CD4-positive, alpha-beta memory T cell (primary cell): ENCODE measurements at regions of chr10 and their contacts with region 1.

Region 1: GRCh38 chr10:109978481-109978880 is 29.3 kb upstream of the ADD3 start:
- DNase-seq: peak; percentile 51 to 63 (median 58)
- H3K4me3 ChIP-seq: no peak overlapping the region
- H3K4me3 Mint-ChIP-seq: no peak overlapping the region
- H3K27ac ChIP-seq: no peak overlapping the region
- H3K27ac Mint-ChIP-seq: no peak overlapping the region
- H3K4me1 ChIP-seq: no peaks in the 10 kb centered on the region
- H3K4me1 Mint-ChIP-seq: peaks cover 0 to 5% (median under 1%) of the 10 kb centered on the region in 4 donors
- H3K27me3 ChIP-seq: no peaks in the 10 kb centered on the region
- H3K27me3 Mint-ChIP-seq: no peaks in the 10 kb centered on the region

Region 2: DNA sequence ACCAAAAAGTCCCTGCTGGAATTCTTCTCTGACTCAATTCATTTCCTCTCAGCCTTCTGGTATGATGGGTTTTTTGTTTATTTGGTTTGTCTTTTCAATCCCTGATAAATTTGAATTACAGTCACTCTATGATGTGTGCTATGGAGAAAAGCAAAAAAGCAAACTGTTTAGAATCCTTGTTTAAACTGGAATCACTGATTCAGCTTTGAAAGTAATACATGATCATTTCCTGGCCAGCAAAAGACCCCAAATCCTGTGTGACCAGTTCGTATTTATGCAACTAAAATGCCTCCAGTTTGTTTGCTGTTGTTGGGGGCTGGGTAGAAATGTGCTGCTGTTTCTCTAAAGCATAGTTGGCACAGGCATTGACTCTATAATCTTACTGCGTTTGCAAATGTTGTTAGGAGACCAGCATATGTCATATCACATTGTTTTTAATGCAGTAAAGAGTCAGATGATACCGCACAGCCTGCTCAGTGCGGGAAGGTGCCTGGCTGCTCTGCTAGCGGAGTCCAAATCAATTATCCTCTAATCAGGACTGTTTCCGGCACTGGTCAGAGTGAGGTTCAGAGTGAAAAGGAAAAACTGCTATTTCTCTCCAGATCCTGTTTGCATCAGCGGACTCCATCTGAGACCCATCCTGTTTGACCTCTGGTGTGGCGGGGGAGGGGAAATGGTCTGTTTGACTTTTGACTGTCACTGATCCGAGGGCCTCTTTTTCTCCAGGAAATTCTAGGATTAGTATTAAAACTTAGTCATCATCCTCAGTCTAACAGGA is 11.3 kb before region 1 on chr10:
- CTCF ChIA-PET with region 1: interaction called, 13 read pairs
- POLR2A ChIA-PET with region 1: no interaction called
- intact Hi-C with region 1: no loop called
- DNase-seq: no peak
- H3K4me3 ChIP-seq: no peak overlapping the region
- H3K4me3 Mint-ChIP-seq: no peak overlapping the region
- H3K27ac ChIP-seq: no peak overlapping the region
- H3K27ac Mint-ChIP-seq: no peak overlapping the region
- H3K4me1 ChIP-seq: no peaks in the 10 kb centered on the region
- H3K4me1 Mint-ChIP-seq: peaks cover 0 to 2% (median under 1%) of the 10 kb centered on the region in 4 donors
- H3K27me3 ChIP-seq: no peaks in the 10 kb centered on the region
- H3K27me3 Mint-ChIP-seq: peaks cover 0 to 6% of the 10 kb centered on the region in 2 donors

Region 3: GRCh38 chr10:109998513-109998912 is 20.0 kb after region 1 on chr10:
- CTCF ChIA-PET with region 1: interaction called, 15 read pairs
- POLR2A ChIA-PET with region 1: no interaction called
- intact Hi-C with region 1: no loop called
- DNase-seq: no peak
- H3K4me3 ChIP-seq: no peak overlapping the region
- H3K4me3 Mint-ChIP-seq: no peak overlapping the region
- H3K27ac ChIP-seq: no peak overlapping the region
- H3K27ac Mint-ChIP-seq: no peak overlapping the region
- H3K4me1 ChIP-seq: no peaks in the 10 kb centered on the region
- H3K4me1 Mint-ChIP-seq: peaks cover 2 to 13% (median 6%) of the 10 kb centered on the region in 4 donors
- H3K27me3 ChIP-seq: no peaks in the 10 kb centered on the region
- H3K27me3 Mint-ChIP-seq: no peaks in the 10 kb centered on the region

Region 4: GRCh38 chr10:110016039-110016438 is 37.6 kb after region 1 on chr10:
- CTCF ChIA-PET with region 1: interaction called, 42 read pairs
- POLR2A ChIA-PET with region 1: no interaction called
- intact Hi-C with region 1: loop called (anchors 2 kb)
- DNase-seq: no peak
- H3K4me3 ChIP-seq: no peak overlapping the region
- H3K4me3 Mint-ChIP-seq: peak overlapping the region in 7 of 8 donors; percentile 16 to 75 (median 57)
- H3K27ac ChIP-seq: no peak overlapping the region
- H3K27ac Mint-ChIP-seq: peak overlapping the region; percentile 79 to 85 (median 83)
- H3K4me1 ChIP-seq: peaks cover 92% of the 10 kb centered on the region
- H3K4me1 Mint-ChIP-seq: peaks cover 60 to 92% (median 76%) of the 10 kb centered on the region in 4 donors
- H3K27me3 ChIP-seq: no peaks in the 10 kb centered on the region
- H3K27me3 Mint-ChIP-seq: no peaks in the 10 kb centered on the region

Region 5: GRCh38 chr10:110036640-110037039 is 58.2 kb after region 1 on chr10:
- CTCF ChIA-PET with region 1: interaction called, 6 read pairs
- POLR2A ChIA-PET with region 1: no interaction called
- intact Hi-C with region 1: loop called (anchors 2 kb)
- DNase-seq: no peak
- H3K4me3 ChIP-seq: no peak overlapping the region
- H3K4me3 Mint-ChIP-seq: peak overlapping the region in 2 of 8 donors; percentile 33 to 37
- H3K27ac ChIP-seq: no peak overlapping the region
- H3K27ac Mint-ChIP-seq: peak overlapping the region in 3 of 7 donors; percentile 8 to 51 (median 46)
- H3K4me1 ChIP-seq: peaks cover 91% of the 10 kb centered on the region
- H3K4me1 Mint-ChIP-seq: peaks cover 57 to 93% (median 75%) of the 10 kb centered on the region in 4 donors
- H3K27me3 ChIP-seq: no peaks in the 10 kb centered on the region
- H3K27me3 Mint-ChIP-seq: no peaks in the 10 kb centered on the region

Region 6: GRCh38 chr10:110103921-110104461 is 125.5 kb after region 1 on chr10:
- CTCF ChIA-PET with region 1: interaction called, 9 read pairs
- POLR2A ChIA-PET with region 1: no interaction called
- intact Hi-C with region 1: loop called (anchors 1 kb)
- DNase-seq: no peak
- H3K4me3 ChIP-seq: no peak overlapping the region
- H3K4me3 Mint-ChIP-seq: peak overlapping the region in 1 of 8 donors; percentile 25
- H3K27ac ChIP-seq: no peak overlapping the region
- H3K27ac Mint-ChIP-seq: peak overlapping the region in 5 of 7 donors; percentile 4 to 73 (median 44)
- H3K4me1 ChIP-seq: peaks cover 35% of the 10 kb centered on the region
- H3K4me1 Mint-ChIP-seq: peaks cover 34 to 72% (median 59%) of the 10 kb centered on the region in 4 donors
- H3K27me3 ChIP-seq: no peaks in the 10 kb centered on the region
- H3K27me3 Mint-ChIP-seq: no peaks in the 10 kb centered on the region

Region 7: GRCh38 chr10:110168601-110169481 is 190.4 kb after region 1 on chr10:
- CTCF ChIA-PET with region 1: no interaction called
- POLR2A ChIA-PET with region 1: no interaction called
- intact Hi-C with region 1: no loop called
- DNase-seq: no peak
- H3K4me3 ChIP-seq: no peak overlapping the region
- H3K4me3 Mint-ChIP-seq: peak overlapping the region in 3 of 8 donors; percentile 10 to 53 (median 31)
- H3K27ac ChIP-seq: no peak overlapping the region
- H3K27ac Mint-ChIP-seq: no peak overlapping the region
- H3K4me1 ChIP-seq: peaks cover 18% of the 10 kb centered on the region
- H3K4me1 Mint-ChIP-seq: peaks cover 4 to 29% (median 18%) of the 10 kb centered on the region in 4 donors
- H3K27me3 ChIP-seq: peaks cover 30% of the 10 kb centered on the region
- H3K27me3 Mint-ChIP-seq: peaks cover 53 to 61% of the 10 kb centered on the region in 2 donors